ENCODE measurements at regions of chr9 and their contacts with region 1.

Region 1: GRCh38 chr9:109805050-109805449 is 25.1 kb downstream of the PALM2AKAP2 start:
- DNase-seq: no peak
- H3K4me3 ChIP-seq: no peak overlapping the region
- H3K27ac ChIP-seq: no peak overlapping the region
- H3K4me1 ChIP-seq: no peaks in the 10 kb centered on the region
- CTCF ChIP-seq: no peak

Region 2: GRCh38 chr9:109311731-109312130 is 493.3 kb before region 1 on chr9:
- CTCF ChIA-PET with region 1: no interaction called
- POLR2A ChIA-PET with region 1: no interaction called
- intact Hi-C with region 1: no loop called
- DNase-seq: no peak
- H3K4me3 ChIP-seq: no peak overlapping the region
- H3K27ac ChIP-seq: no peak overlapping the region
- H3K4me1 ChIP-seq: no peaks in the 10 kb centered on the region
- CTCF ChIP-seq: no peak

Region 3: DNA sequence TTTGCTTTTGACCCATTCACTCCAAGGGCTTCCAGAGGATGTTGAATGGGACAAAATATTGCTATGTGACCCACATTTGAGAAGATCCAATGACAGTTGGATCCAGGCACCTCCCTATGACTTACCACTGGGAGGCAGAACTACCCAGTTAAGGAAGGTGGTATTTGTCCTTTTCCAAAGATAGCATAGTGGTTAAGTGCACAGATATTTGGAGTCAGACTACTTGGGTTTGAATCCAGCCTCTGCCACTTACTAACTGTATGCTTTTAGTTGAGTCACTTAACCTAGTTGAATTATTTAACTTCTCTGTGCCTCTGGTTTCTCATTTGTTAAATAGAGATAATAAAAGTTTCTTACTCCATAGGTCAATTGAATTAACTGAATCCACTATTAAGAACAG is 99.5 kb before region 1 on chr9:
- CTCF ChIA-PET with region 1: no interaction called
- POLR2A ChIA-PET with region 1: no interaction called
- intact Hi-C with region 1: no loop called
- DNase-seq: peak; percentile 2
- H3K4me3 ChIP-seq: no peak overlapping the region
- H3K27ac ChIP-seq: no peak overlapping the region
- H3K4me1 ChIP-seq: no peaks in the 10 kb centered on the region
- CTCF ChIP-seq: 0 out of 2 replicates have a peak, but pooled peaks have one; percentile 21

Region 4: GRCh38 chr9:109766336-109766735 is 38.7 kb before region 1 on chr9:
- CTCF ChIA-PET with region 1: no interaction called
- POLR2A ChIA-PET with region 1: no interaction called
- intact Hi-C with region 1: loop called (anchors 2 kb)
- DNase-seq: no peak
- H3K4me3 ChIP-seq: no peak overlapping the region
- H3K27ac ChIP-seq: no peak overlapping the region
- H3K4me1 ChIP-seq: no peaks in the 10 kb centered on the region
- CTCF ChIP-seq: no peak

Measured in OCI-LY7 (cell line).